ENCODE measurements at regions of chr16 and their contacts with region 1.

Region 1: DNA sequence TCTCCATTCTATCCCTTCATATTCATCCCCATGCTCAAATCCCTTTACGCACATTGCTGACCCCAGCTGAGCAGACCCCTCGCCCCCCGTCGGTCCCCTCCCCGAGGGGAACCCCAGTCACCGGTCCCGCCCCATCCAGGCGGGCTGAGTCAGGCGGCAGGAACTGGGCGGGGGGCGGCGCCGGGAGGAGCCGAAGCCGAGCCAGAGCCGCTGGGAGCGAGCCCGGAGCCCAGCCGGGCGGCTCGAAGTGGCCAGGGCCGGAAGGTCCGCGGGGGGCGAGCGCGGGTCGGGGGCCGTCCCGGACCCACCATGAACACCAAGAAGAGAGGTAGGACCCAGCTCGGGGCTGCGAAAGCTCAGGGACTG is 8.6 kb downstream of the RIPOR1 start:
- DNase-seq: peak in 14 of 35 experiments; percentile 20 to 69 (median 34)
- ATAC-seq: peak; percentile 48 to 58 (median 55)
- H3K4me3 ChIP-seq: peak overlapping the region; percentile 61 to 94
- H3K4me3 Mint-ChIP-seq: peak overlapping the region; percentile 73 to 86 (median 78)
- H3K27ac ChIP-seq: peak overlapping the region; percentile 84
- H3K27ac Mint-ChIP-seq: peak overlapping the region; percentile 78 to 86
- H3K4me1 ChIP-seq: peaks cover 0 to 36% of the 10 kb centered on the region in 2 experiments
- H3K4me1 Mint-ChIP-seq: peaks cover 33 to 62% (median 53%) of the 10 kb centered on the region in 3 donors
- H3K27me3 ChIP-seq: peaks cover 0 to 5% of the 10 kb centered on the region in 2 experiments
- H3K27me3 Mint-ChIP-seq: no peaks in the 10 kb centered on the region

Region 2: DNA sequence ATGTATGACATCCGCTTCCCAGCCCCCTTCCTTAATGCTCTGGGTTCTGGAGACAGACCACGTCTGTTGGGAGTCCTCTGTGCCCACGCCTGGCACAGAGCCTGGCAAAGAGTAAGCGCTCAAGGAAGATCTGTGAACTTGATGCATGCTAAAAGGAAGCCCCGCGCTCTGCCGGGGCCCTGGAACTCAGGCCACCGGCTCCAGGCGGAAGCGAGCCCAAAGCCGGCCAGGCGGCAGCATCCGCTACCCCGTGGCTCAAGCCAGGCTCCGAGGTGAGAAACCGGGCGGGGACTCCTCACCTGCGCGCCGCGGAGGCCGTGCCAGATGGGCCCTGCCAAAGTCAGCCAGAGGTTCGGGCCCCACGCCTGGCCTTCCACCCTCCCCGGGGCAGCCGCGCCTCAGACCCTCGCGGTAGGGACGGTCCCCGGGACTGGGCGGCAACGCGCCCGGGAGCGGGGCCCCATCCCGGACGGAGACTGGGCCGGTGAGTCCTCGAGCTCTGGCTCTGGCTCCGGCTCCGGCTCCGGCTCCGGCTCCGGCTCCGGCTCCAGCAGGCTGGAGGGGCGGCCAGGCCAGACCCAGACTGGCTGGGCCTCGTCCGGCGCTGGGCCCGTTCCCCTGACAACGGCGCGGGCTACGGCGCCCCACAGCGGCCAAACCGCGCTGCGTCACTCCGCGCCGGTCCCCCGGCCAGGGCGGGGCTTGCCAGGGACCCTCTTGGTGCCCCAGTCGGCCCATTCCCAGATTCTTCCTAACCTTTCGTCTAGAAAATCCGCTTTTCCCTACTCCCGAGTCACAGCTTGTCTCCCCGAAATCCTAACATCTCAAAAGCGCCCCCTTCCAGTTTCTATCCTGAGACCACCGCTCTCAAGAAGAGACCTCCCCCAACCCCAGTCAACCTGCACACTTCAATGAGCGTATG is 121.1 kb before region 1 on chr16 and contains the start of gene ZDHHC1:
- CTCF ChIA-PET with region 1: no interaction called
- POLR2A ChIA-PET with region 1: no interaction called
- DNase-seq: peak in 15 of 35 experiments; percentile 15 to 59 (median 38)
- ATAC-seq: peak; percentile 84 to 90 (median 86)
- H3K4me3 ChIP-seq: peak within 1 kb of the TSS; percentile 34 to 64
- H3K4me3 Mint-ChIP-seq: peak within 1 kb of the TSS; percentile 58 to 83 (median 74)
- H3K27ac ChIP-seq: no peak within 1 kb of the TSS
- H3K27ac Mint-ChIP-seq: no peak within 1 kb of the TSS
- H3K4me1 ChIP-seq: peaks cover 3 to 11% of the 10 kb centered on the region in 2 experiments
- H3K4me1 Mint-ChIP-seq: peaks cover 6 to 12% (median 11%) of the 10 kb centered on the region in 3 donors
- H3K27me3 ChIP-seq: peaks cover 0 to 43% of the 10 kb centered on the region in 2 experiments
- H3K27me3 Mint-ChIP-seq: peaks cover 31 to 34% of the 10 kb centered on the region in 2 donors
- total RNA-seq, gene ZDHHC1: 0.26 to 0.85 (median 0.47) TPM in 4 of 5 donors, not detected in the other

Region 3: DNA sequence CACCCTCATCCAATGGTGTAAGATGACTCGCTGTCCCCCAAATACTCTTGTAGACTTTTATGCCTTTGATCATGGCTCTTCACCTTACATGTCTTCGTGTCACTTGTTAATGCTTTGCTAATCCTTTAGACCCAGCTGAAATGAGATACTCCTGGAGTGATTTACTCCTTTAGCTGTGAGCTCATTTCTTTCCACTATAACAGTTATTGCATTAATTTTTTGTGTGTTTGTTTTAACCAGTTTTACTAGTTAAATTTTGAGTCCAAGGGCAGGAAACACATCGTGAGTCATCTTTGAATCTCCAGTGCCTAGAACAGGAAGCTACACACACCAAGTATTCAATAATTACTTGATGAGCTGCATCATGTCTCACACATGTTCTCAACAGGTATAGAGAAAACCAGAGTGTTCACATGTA is 18.6 kb after region 1 on chr16:
- CTCF ChIA-PET with region 1: interaction called in 1 of 2 experiments, 3 read pairs
- POLR2A ChIA-PET with region 1: interaction called, 3 to 13 read pairs
- DNase-seq: peak in 2 of 35 experiments; percentile 23 to 64
- ATAC-seq: peak; percentile 90 to 98 (median 96)
- H3K4me3 ChIP-seq: no peak overlapping the region
- H3K4me3 Mint-ChIP-seq: peak overlapping the region; percentile 62 to 72 (median 62)
- H3K27ac ChIP-seq: peak overlapping the region; percentile 80
- H3K27ac Mint-ChIP-seq: peak overlapping the region; percentile 96 to 99
- H3K4me1 ChIP-seq: peaks cover 9 to 57% of the 10 kb centered on the region in 2 experiments
- H3K4me1 Mint-ChIP-seq: peaks cover 53 to 61% (median 53%) of the 10 kb centered on the region in 3 donors
- H3K27me3 ChIP-seq: no peaks in the 10 kb centered on the region
- H3K27me3 Mint-ChIP-seq: no peaks in the 10 kb centered on the region